ENCODE measurements at regions of chr16 and their contacts with region 1.

Region 1: DNA sequence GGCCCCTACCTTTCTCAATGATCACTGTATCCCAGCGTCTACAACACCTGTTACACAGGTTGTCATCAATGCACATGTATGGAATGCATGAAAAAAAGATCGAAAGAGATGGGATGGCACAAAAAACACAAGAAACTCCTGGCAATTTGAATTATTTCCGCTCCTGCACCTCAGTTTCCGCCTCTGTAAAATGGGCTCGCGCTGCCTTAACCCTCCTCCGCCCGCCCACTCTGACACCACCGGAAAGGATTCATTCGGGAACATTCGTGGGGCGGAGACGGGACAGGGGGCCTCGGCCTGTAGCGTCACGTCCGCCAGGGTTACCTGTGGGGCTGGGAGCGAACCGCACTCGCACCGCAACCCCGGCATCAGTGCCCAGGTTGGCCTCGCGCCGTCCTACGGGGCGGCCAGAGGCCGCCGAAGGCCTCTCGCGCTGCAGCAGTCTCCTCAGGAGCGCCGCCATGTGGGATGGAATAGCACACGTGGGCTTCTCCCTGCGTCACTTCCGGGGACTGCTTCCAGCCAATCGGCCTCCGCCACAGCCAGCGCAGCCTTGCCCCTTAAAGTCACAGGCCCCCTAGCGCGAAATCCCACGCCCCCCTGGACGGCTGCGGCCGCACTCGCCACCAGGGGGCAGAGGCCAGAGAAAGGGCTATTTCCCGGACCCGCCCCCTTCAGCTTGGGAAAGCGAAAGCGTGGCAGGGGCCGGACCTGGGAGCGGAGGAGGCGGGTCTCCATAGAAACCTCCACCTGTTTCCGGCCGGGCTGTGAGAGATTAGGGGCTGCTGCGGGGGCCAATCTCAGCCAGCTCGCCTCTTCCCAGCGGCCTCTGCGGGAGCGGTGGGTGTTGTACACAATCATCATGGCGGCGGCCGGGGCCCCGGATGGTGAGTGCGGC is at the starts of genes EARS2 and UBFD1:
- DNase-seq: peak; percentile 90 to 98 (median 95)
- ATAC-seq: peak; percentile 90
- H3K4me3 ChIP-seq: peak within 1 kb of the TSS; percentile 82 to 90
- H3K4me3 Mint-ChIP-seq: peak within 1 kb of the TSS; percentile 91
- H3K27ac ChIP-seq: peak within 1 kb of the TSS; percentile 88 to 92
- H3K27ac Mint-ChIP-seq: peak within 1 kb of the TSS; percentile 92
- H3K4me1 ChIP-seq: peaks cover 21% of the 10 kb centered on the region
- H3K4me1 Mint-ChIP-seq: peaks cover 38% of the 10 kb centered on the region
- H3K27me3 ChIP-seq: no peaks in the 10 kb centered on the region
- H3K27me3 Mint-ChIP-seq: no peaks in the 10 kb centered on the region
- CTCF ChIP-seq: peak; percentile 48
- total RNA-seq, gene EARS2: 7.2 to 8.8 TPM
- total RNA-seq, gene UBFD1: 49.0 to 51.1 TPM

Region 2: GRCh38 chr16:23149349-23149996 is 407.7 kb before region 1 on chr16 and contains the start of gene USP31:
- CTCF ChIA-PET with region 1: no interaction called
- POLR2A ChIA-PET with region 1: no interaction called
- intact Hi-C with region 1: loop called in 1 of 2 experiments (anchors 10 kb)
- DNase-seq: peak; percentile 76 to 95 (median 87)
- ATAC-seq: peak; percentile 95
- H3K4me3 ChIP-seq: peak within 1 kb of the TSS; percentile 64 to 78
- H3K4me3 Mint-ChIP-seq: peak within 1 kb of the TSS; percentile 94
- H3K27ac ChIP-seq: peak within 1 kb of the TSS; percentile 17 to 37
- H3K27ac Mint-ChIP-seq: peak within 1 kb of the TSS; percentile 64
- H3K4me1 ChIP-seq: peaks cover 10% of the 10 kb centered on the region
- H3K4me1 Mint-ChIP-seq: peaks cover 20% of the 10 kb centered on the region
- H3K27me3 ChIP-seq: no peaks in the 10 kb centered on the region
- H3K27me3 Mint-ChIP-seq: peaks cover 5% of the 10 kb centered on the region
- CTCF ChIP-seq: no peak
- total RNA-seq, gene USP31: 1.6 to 1.8 TPM

Region 3: DNA sequence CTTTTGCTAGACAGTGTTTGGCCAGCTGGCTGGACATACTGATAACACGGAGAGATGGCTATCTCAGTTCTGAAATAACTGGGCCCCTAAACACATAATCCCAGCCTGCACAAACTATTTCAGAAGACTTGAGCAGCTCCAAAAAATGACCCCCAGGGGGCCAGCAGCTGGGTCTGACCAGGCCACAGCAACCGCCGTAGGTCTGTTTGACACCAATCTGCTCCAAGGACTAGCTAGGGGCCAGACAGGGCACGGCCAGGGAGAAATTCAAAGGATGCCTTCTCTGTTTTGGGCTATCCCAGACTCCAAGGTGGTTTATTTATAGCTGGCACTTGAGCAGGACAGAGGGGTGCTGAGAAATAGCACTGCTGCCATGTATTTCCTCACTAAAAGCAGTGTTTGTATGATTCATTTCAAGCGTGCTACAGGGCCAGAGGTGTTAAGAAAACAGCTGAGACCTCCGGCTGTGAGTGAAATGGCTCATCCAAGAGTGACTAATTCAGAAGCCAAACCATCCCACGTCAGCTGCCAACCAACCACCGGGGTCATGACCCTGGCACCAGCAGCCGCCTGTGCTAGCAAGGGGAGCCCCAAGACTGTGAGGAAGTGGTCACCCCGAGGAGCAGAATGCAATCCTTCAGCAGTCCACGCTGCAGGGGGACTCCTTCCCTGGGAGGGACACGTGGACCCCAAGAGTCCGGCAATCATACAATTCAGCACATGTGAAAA is 52.5 kb before region 1 on chr16:
- CTCF ChIA-PET with region 1: no interaction called
- POLR2A ChIA-PET with region 1: interaction called, 4 read pairs
- intact Hi-C with region 1: loop called in 1 of 2 experiments (anchors 1 kb)
- DNase-seq: peak; percentile 38 to 92 (median 71)
- ATAC-seq: peak; percentile 83
- H3K4me3 ChIP-seq: no peak overlapping the region
- H3K4me3 Mint-ChIP-seq: peak overlapping the region; percentile 45
- H3K27ac ChIP-seq: peak overlapping the region; percentile 16 to 77
- H3K27ac Mint-ChIP-seq: peak overlapping the region; percentile 94
- H3K4me1 ChIP-seq: peaks cover 53% of the 10 kb centered on the region
- H3K4me1 Mint-ChIP-seq: peaks cover 74% of the 10 kb centered on the region
- H3K27me3 ChIP-seq: no peaks in the 10 kb centered on the region
- H3K27me3 Mint-ChIP-seq: no peaks in the 10 kb centered on the region
- CTCF ChIP-seq: no peak

Region 4: GRCh38 chr16:23595951-23596720 is 39.0 kb after region 1 on chr16 and contains the start of gene NDUFAB1:
- CTCF ChIA-PET with region 1: interaction called, 6 read pairs
- POLR2A ChIA-PET with region 1: interaction called, 5 read pairs
- intact Hi-C with region 1: loop called (anchors 1 kb)
- DNase-seq: peak; percentile 83 to 94 (median 90)
- ATAC-seq: peak; percentile 100
- H3K4me3 ChIP-seq: peak within 1 kb of the TSS; percentile 81 to 82
- H3K4me3 Mint-ChIP-seq: peak within 1 kb of the TSS; percentile 82
- H3K27ac ChIP-seq: peak within 1 kb of the TSS; percentile 67 to 77
- H3K27ac Mint-ChIP-seq: peak within 1 kb of the TSS; percentile 88
- H3K4me1 ChIP-seq: peaks cover 13% of the 10 kb centered on the region
- H3K4me1 Mint-ChIP-seq: peaks cover 41% of the 10 kb centered on the region
- H3K27me3 ChIP-seq: no peaks in the 10 kb centered on the region
- H3K27me3 Mint-ChIP-seq: no peaks in the 10 kb centered on the region
- CTCF ChIP-seq: peak; percentile 95
- total RNA-seq, gene NDUFAB1: 32.3 to 36.0 TPM

Region 5: DNA sequence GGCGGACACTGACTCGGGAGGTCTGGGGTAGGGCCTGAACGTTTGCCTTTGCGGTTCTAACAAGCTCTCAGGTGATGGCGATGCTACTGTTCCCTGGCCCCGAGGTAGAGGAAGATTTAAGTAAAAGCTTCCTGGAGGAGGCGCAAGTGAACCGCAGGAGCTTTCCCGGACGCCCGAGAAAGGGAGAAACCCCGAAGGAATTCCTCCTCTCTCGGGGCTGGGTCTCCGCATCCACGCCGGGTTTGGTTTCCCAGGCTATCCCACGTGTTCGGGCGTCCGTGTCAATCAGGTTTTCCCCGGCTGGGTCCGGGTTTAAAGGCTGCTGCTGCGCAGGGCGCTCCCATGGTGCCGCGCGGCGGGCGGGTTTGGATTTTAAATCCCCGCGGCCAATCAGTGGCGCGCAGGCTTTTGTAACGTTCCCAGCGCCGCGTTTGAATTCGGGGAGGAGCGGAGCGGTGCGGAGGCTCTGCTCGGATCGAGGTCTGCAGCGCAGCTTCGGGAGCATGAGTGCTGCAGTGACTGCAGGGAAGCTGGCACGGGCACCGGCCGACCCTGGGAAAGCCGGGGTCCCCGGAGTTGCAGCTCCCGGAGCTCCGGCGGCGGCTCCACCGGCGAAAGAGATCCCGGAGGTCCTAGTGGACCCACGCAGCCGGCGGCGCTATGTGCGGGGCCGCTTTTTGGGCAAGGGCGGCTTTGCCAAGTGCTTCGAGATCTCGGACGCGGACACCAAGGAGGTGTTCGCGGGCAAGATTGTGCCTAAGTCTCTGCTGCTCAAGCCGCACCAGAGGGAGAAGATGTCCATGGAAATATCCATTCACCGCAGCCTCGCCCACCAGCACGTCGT is 121.5 kb after region 1 on chr16 and contains the start of gene PLK1:
- CTCF ChIA-PET with region 1: no interaction called
- POLR2A ChIA-PET with region 1: no interaction called
- intact Hi-C with region 1: loop called in 1 of 2 experiments (anchors 1 kb)
- DNase-seq: peak; percentile 44 to 76 (median 68)
- ATAC-seq: peak; percentile 98
- H3K4me3 ChIP-seq: peak within 1 kb of the TSS; percentile 65 to 71
- H3K4me3 Mint-ChIP-seq: peak within 1 kb of the TSS; percentile 85
- H3K27ac ChIP-seq: no peak within 1 kb of the TSS
- H3K27ac Mint-ChIP-seq: no peak within 1 kb of the TSS
- H3K4me1 ChIP-seq: peaks cover 6% of the 10 kb centered on the region
- H3K4me1 Mint-ChIP-seq: peaks cover 17% of the 10 kb centered on the region
- H3K27me3 ChIP-seq: no peaks in the 10 kb centered on the region
- H3K27me3 Mint-ChIP-seq: no peaks in the 10 kb centered on the region
- CTCF ChIP-seq: no peak
- total RNA-seq, gene PLK1: 0.25 to 0.76 TPM

Region 6: GRCh38 chr16:25118265-25119241 is 1561.4 kb after region 1 on chr16:
- CTCF ChIA-PET with region 1: no interaction called
- POLR2A ChIA-PET with region 1: no interaction called
- intact Hi-C with region 1: loop called in 1 of 2 experiments (anchors 5 kb)
- DNase-seq: no peak
- ATAC-seq: no peak
- H3K4me3 ChIP-seq: no peak overlapping the region
- H3K4me3 Mint-ChIP-seq: no peak overlapping the region
- H3K27ac ChIP-seq: no peak overlapping the region
- H3K27ac Mint-ChIP-seq: peak overlapping the region; percentile 60
- H3K4me1 ChIP-seq: peaks cover 3% of the 10 kb centered on the region
- H3K4me1 Mint-ChIP-seq: peaks cover 55% of the 10 kb centered on the region
- H3K27me3 ChIP-seq: no peaks in the 10 kb centered on the region
- H3K27me3 Mint-ChIP-seq: no peaks in the 10 kb centered on the region
- CTCF ChIP-seq: no peak

Measured in CD8-positive, alpha-beta T cell (primary cell).